ENCODE measurements at regions of chr3 and their contacts with region 1.

Region 1: GRCh38 chr3:3296979-3297381 is 117.5 kb upstream of the CRBN start:
- DNase-seq: no peak
- H3K4me3 ChIP-seq: no peak overlapping the region
- CTCF ChIP-seq: no peak
- POLR2A ChIP-seq: no peak

Region 2: DNA sequence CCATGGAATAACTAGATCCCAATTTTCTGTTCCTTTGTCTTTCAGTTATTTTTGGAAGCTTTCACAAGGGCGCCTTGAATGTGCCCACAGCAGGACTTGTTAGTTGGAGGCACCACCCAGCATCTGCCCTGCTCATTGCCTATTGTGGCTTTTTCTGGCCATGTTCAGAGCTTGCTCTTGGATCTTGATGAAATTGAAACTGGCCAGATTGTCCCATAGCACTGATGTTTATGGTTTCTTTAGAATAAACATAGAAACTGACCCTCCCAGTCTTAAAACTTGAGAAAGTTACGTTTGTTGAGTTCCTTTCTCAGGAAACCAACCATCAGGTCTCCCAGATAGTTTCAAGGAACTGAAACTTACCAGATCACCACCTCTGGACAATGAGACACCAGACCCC is 661.5 kb before region 1 on chr3:
- intact Hi-C with region 1: no loop called
- DNase-seq: no peak
- H3K4me3 ChIP-seq: no peak overlapping the region
- CTCF ChIP-seq: no peak
- POLR2A ChIP-seq: no peak

Region 3: GRCh38 chr3:3589715-3590130 is 292.7 kb after region 1 on chr3:
- intact Hi-C with region 1: no loop called
- DNase-seq: no peak
- H3K4me3 ChIP-seq: no peak overlapping the region
- CTCF ChIP-seq: no peak
- POLR2A ChIP-seq: no peak

Region 4: GRCh38 chr3:5255404-5256344 is 1958.7 kb after region 1 on chr3:
- intact Hi-C with region 1: loop called (anchors 5 kb)
- DNase-seq: no peak
- H3K4me3 ChIP-seq: no peak overlapping the region
- CTCF ChIP-seq: no peak
- POLR2A ChIP-seq: no peak